ENCODE measurements at regions of chr6 and their contacts with region 1.

Region 1: DNA sequence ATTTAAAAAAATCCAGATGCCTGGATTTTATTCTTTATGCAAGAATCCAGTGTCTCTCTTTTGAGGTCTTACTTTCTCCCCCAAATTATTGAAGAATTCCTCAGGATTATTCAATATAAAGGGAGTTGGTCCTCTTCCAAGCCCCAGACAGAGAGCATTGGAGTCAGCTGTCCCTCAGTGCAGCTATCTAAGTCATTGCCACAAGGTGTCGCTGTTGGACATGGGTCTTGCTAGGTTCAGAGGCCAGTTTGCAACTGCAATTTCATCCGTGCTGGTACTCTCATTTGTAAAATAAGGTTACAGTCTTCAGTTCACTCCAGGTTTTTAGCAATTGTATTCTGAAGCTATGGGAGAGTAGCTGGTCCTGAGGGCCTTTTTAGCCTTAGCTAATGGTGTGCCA is 27.8 kb downstream of the CCN2 start:
- DNase-seq: no peak
- ATAC-seq: no peak
- H3K4me3 ChIP-seq: no peak overlapping the region
- H3K27ac ChIP-seq: no peak overlapping the region
- H3K4me1 ChIP-seq: no peaks in the 10 kb centered on the region
- H3K27me3 ChIP-seq: no peaks in the 10 kb centered on the region

Region 2: GRCh38 chr6:131683479-131683878 is 239.9 kb before region 1 on chr6:
- intact Hi-C with region 1: no loop called
- DNase-seq: no peak
- ATAC-seq: no peak
- H3K4me3 ChIP-seq: no peak overlapping the region
- H3K27ac ChIP-seq: no peak overlapping the region
- H3K4me1 ChIP-seq: no peaks in the 10 kb centered on the region
- H3K27me3 ChIP-seq: no peaks in the 10 kb centered on the region

Region 3: GRCh38 chr6:131868836-131869235 is 54.5 kb before region 1 on chr6:
- intact Hi-C with region 1: no loop called
- DNase-seq: no peak
- ATAC-seq: no peak
- H3K4me3 ChIP-seq: no peak overlapping the region
- H3K27ac ChIP-seq: no peak overlapping the region
- H3K4me1 ChIP-seq: no peaks in the 10 kb centered on the region
- H3K27me3 ChIP-seq: no peaks in the 10 kb centered on the region

Region 4: DNA sequence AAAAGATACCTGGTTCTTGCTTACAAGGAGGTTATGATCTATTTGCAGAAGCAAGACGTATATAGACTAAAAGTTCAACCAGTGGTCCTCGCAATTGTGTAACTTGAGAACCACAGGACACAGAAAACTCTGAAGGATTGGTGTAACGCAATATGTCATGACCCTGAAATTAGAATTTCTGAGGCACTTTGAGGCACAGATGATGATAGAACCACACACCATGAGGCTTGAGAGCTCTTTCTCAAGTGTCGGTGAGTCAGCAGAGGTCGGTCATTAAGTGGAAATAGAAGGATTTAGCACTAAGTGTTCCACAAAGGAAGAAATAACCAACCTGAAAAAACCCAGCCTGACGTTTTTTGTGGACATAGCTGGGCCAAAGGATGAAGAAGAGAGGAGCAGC is 43.1 kb after region 1 on chr6:
- intact Hi-C with region 1: no loop called
- DNase-seq: no peak
- ATAC-seq: no peak
- H3K4me3 ChIP-seq: no peak overlapping the region
- H3K27ac ChIP-seq: no peak overlapping the region
- H3K4me1 ChIP-seq: no peaks in the 10 kb centered on the region
- H3K27me3 ChIP-seq: no peaks in the 10 kb centered on the region

Region 5: DNA sequence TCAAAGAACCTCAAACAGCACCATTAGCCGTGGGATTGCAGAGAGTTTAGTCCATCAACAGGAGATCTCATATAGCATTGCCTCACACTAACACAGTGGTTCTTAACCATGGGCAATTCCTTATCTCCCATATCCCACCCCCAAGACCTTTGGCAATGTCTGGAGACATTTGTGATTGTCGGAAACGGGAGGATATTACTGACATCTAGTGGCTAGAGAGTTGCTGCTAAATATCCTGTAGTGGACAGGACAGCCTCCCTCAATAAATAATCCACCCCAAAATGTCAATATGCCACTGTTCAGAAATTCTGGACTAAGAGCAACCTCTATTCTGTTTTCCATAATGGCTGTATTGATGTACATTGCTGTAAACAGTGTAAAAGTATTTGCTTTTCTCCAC is 237.9 kb after region 1 on chr6:
- intact Hi-C with region 1: loop called (anchors 5 to 10 kb)
- DNase-seq: no peak
- ATAC-seq: peak; percentile 74
- H3K4me3 ChIP-seq: no peak overlapping the region
- H3K27ac ChIP-seq: no peak overlapping the region
- H3K4me1 ChIP-seq: peaks cover 0 to 2% of the 10 kb centered on the region in 2 donors
- H3K27me3 ChIP-seq: no peaks in the 10 kb centered on the region

Region 6: DNA sequence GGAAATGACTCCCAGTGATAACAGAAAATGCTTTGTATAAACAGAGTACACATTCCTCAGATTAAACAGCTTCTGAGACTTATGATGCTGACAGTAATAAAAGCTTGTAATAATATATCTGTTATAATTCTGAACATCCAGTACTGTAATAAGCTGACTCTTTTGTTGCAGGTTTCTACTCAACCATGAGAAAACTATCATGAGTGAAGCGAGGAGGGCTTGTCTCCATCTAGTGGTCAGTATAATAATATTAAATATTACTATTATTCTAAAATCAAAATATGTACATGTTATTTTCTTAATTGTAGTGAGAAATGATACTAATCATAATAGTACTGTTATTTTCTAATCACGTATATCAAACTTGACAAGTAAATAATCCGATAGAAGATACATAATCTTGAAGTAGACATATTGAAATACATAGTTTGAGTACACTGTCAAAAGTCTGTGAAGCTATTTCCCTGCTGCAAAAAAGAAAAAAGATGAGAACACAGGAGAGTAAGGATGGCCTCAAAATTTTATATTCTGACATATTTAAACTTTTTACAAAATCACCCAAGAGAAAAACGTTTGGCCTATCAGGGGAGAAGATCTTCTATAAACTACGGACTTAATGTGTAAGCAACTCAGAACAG is 294.8 kb after region 1 on chr6:
- intact Hi-C with region 1: loop called (anchors 2 kb)
- DNase-seq: no peak
- ATAC-seq: no peak
- H3K4me3 ChIP-seq: no peak overlapping the region
- H3K27ac ChIP-seq: no peak overlapping the region
- H3K4me1 ChIP-seq: no peaks in the 10 kb centered on the region
- H3K27me3 ChIP-seq: no peaks in the 10 kb centered on the region

Region 7: GRCh38 chr6:132259070-132259469 is 335.7 kb after region 1 on chr6:
- intact Hi-C with region 1: loop called in 1 of 2 experiments (anchors 10 kb)
- DNase-seq: no peak
- ATAC-seq: peak; percentile 39
- H3K4me3 ChIP-seq: no peak overlapping the region
- H3K27ac ChIP-seq: no peak overlapping the region
- H3K4me1 ChIP-seq: no peaks in the 10 kb centered on the region
- H3K27me3 ChIP-seq: no peaks in the 10 kb centered on the region

Region 8: GRCh38 chr6:132483779-132484679 is 560.7 kb after region 1 on chr6:
- intact Hi-C with region 1: loop called (anchors 5 to 10 kb)
- DNase-seq: no peak
- ATAC-seq: peak; percentile 89
- H3K4me3 ChIP-seq: no peak overlapping the region
- H3K27ac ChIP-seq: no peak overlapping the region
- H3K4me1 ChIP-seq: no peaks in the 10 kb centered on the region
- H3K27me3 ChIP-seq: no peaks in the 10 kb centered on the region